ENCODE measurements at regions of chr17 and their contacts with region 1.

Region 1: DNA sequence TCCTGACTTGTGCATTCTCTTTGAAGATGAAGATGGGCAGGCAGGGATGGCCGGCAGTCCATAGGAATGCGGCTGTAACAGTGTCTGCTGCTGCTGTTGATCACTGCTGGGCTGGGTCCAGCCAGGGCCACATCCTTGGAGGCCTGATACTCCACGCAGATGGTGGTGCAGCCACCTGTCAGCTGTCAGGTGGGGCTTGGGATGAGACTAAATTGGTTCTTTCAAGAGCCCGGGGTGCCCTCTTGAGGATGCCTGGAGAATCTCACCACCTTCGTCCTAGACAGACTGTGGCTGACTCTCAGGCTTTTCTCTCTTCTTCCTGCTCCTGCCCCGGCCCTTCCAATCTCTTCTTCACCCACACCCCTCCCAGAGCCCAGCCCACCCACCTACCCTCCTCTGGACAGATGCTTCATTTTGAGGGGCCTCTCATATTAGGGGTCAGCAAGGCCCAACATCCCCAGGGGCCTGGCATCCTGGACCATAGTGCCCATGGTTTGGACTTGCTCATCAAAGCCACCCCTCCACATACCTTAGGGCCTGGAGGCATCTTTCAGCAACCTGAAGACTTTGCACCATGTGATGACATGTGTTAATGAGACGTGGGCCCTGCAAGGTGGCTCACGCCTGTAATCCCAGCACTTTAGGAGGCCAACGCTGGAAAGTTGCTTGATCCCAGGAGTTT is 19.1 kb downstream of the OSBPL7 start:
- DNase-seq: no peak
- ATAC-seq: peak; percentile 98
- H3K4me3 ChIP-seq: no peak overlapping the region
- H3K27ac ChIP-seq: no peak overlapping the region
- H3K4me1 ChIP-seq: no peaks in the 10 kb centered on the region
- H3K27me3 ChIP-seq: no peaks in the 10 kb centered on the region
- CTCF ChIP-seq: peak; percentile 69 to 83 (median 77)
- EP300 ChIP-seq: no peak
- POLR2A ChIP-seq: no peak
- RAD21 ChIP-seq: peak; percentile 74

Region 2: GRCh38 chr17:47776330-47777197 is 25.9 kb before region 1 on chr17:
- CTCF ChIA-PET with region 1: interaction called, 4 read pairs
- POLR2A ChIA-PET with region 1: no interaction called
- RAD21 ChIA-PET with region 1: interaction called, 3 read pairs
- SMC1A ChIA-PET with region 1: no interaction called
- in situ Hi-C with region 1: no loop called
- intact Hi-C with region 1: loop called (anchors 2 kb)
- DNase-seq: no peak
- ATAC-seq: peak; percentile 93
- H3K4me3 ChIP-seq: no peak overlapping the region
- H3K27ac ChIP-seq: no peak overlapping the region
- H3K4me1 ChIP-seq: no peaks in the 10 kb centered on the region
- H3K27me3 ChIP-seq: peaks cover 0 to 4% of the 10 kb centered on the region in 2 experiments; a peak in 2 of 4 replicates
- CTCF ChIP-seq: peak; percentile 69 to 77 (median 71)
- EP300 ChIP-seq: no peak
- POLR2A ChIP-seq: no peak
- RAD21 ChIP-seq: peak; percentile 64